Activated naive CD4-positive, alpha-beta T cell treated with anti-CD3 and anti-CD28 coated beads, Interleukin-2, amount 10 ng/mL, durations not matched to agents 7 days and 5 days (primary cell): ENCODE measurements at regions of chr15 and their contacts with region 1.

Region 1: GRCh38 chr15:101652783-101653430 is 726 bp upstream of the TM2D3 start:
- DNase-seq: no peak
- H3K4me3 Mint-ChIP-seq: peak overlapping the region; percentile 85
- H3K27ac Mint-ChIP-seq: peak overlapping the region; percentile 98
- H3K4me1 Mint-ChIP-seq: peaks cover 40% of the 10 kb centered on the region
- H3K27me3 Mint-ChIP-seq: no peaks in the 10 kb centered on the region

Region 2: GRCh38 chr15:101288908-101289513 is 363.9 kb before region 1 on chr15:
- CTCF ChIA-PET with region 1: interaction called, 15 read pairs
- DNase-seq: no peak
- H3K4me3 Mint-ChIP-seq: no peak overlapping the region
- H3K27ac Mint-ChIP-seq: peak overlapping the region; percentile 50
- H3K4me1 Mint-ChIP-seq: peaks cover 54% of the 10 kb centered on the region
- H3K27me3 Mint-ChIP-seq: no peaks in the 10 kb centered on the region

Region 3: DNA sequence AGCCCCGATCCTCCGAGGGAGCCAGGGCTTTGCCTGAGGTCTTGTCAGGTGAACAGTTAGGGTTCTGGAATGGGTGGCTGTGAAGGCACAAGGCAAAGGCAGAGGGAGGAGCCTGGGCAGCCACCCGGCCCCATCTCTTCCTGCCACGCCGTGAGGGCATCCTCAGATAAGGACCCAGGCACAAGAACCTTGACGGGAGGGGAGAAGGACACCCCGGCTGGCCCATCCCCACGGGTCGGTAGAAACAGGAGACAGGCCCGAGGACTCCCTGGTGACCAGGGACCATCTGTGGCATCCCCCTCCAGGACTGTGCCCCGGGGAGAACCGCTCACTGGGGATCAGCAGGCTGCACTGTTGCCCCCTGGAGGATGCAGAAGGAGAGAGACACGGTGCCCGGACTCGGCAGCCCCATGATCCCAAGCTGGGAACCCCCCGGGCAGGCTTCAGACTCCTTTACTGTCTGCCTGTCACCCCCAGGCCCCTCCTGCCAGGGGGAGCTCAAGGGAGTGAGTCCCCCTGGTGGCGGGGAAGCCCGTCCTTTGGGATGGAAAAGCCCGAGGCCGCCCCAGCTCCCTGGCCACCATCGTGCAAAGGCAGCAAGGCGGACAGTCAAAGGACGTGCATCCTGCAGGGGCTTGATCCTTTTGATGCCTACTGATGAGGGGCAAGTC is 151.1 kb before region 1 on chr15:
- CTCF ChIA-PET with region 1: no interaction called
- DNase-seq: peak; percentile 68
- H3K4me3 Mint-ChIP-seq: peak overlapping the region; percentile 32
- H3K27ac Mint-ChIP-seq: no peak overlapping the region
- H3K4me1 Mint-ChIP-seq: peaks cover 36% of the 10 kb centered on the region
- H3K27me3 Mint-ChIP-seq: peaks cover 67% of the 10 kb centered on the region